Astrocyte of the cerebellum (primary cell): ENCODE measurements at regions of chr16 and their contacts with region 1.

Region 1: DNA sequence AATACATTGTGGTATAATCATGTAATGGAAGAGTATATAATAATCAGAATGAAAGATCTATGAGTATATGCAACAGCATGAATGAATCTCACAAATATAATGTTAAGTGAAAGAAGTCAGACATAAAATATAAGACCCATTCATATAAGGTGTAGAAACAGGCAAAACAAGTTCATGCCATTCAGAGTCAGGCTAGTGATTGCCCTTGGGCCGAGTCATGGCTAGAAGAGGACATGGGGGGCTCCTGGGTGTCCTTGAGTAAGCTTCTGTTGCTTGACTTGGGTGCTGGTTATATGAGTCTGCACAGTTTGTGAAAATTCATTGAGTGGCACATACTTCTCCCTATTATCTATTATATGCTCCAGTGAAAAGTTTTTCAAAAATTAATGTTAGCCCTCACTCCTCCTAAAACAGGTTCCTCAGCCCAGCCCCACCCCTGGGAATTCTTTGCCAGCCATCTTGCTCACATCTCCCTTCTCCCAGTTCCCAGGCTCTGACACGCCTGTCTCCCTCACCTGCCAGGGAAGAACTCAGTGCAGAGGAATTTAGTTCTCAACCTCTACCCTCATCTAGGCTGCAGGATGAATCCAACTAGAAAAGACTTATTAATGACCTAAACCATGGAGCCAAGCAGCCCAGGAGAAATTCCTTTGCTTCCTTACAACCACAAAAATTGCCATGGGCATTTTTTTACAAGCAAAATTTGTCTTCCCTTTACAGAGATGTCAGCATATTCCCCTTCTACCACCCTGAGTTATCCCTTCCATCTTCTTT is 52.4 kb upstream of the NFAT5 start:
- DNase-seq: peak; percentile 58
- H3K4me3 ChIP-seq: no peak overlapping the region
- CTCF ChIP-seq: no peak

Region 2: DNA sequence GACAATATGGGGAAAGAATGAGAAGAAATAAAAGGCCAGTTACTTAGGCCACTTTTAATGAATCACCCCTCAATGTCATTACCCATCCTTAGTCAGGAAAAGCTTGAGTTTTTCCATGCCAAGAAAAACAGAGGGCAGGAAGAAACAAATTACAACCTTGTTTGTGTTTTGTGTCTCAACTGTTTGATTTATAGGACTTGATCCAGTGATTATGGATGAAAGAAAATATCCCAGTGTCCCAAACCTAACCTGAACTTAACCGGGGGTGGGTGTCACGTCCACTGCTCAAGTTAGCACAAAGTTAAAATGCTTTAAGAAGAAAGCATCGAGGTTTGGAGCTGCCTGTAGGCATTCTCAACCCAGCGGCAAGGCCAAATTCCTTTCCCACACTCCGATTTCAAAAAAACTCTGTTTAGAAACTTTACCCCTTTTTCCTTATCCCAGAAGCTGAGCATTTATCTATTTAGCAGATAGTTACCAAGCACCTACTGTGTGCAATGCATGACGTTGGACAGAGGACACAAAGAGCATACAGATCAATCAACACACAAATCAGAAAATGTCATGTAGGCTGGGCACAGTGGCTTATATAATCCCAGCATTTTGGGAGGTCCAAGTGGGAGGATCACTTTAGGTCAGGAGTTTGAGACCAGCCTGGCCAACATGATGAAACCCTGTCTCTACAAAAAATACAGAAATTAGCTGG is 102.9 kb before region 1 on chr16:
- in situ Hi-C with region 1: loop called (anchors 5 kb)
- DNase-seq: peak; percentile 23
- H3K4me3 ChIP-seq: no peak overlapping the region
- CTCF ChIP-seq: no peak

Region 3: GRCh38 chr16:69482410-69482991 is 30.9 kb before region 1 on chr16:
- in situ Hi-C with region 1: no loop called
- DNase-seq: peak; percentile 31
- H3K4me3 ChIP-seq: no peak overlapping the region
- CTCF ChIP-seq: no peak

Region 4: GRCh38 chr16:69565671-69566239 is 52.4 kb after region 1 on chr16 and contains the start of gene NFAT5:
- in situ Hi-C with region 1: no loop called
- DNase-seq: peak; percentile 38
- H3K4me3 ChIP-seq: peak within 1 kb of the TSS; percentile 73
- CTCF ChIP-seq: no peak